Activated T-helper 2 cell treated with anti-CD3 and anti-CD28 coated beads, Interferon-gamma antibody, Interleukin-2, Interleukin-4, amounts not matched to agents 10 μg/mL and 5 μg/mL and 100 μg/mL, durations not matched to agents 14 hours and 24 hours and 36 hours (primary cell): ENCODE measurements at regions of chr11 and their contacts with region 1.

Region 1: GRCh38 chr11:83172551-83172950 is 15.6 kb downstream of the PCF11 start:
- DNase-seq: no peak
- H3K4me3 Mint-ChIP-seq: no peak overlapping the region
- H3K27ac Mint-ChIP-seq: no peak overlapping the region
- H3K4me1 Mint-ChIP-seq: peaks cover 61% of the 10 kb centered on the region
- H3K27me3 Mint-ChIP-seq: no peaks in the 10 kb centered on the region

Region 2: DNA sequence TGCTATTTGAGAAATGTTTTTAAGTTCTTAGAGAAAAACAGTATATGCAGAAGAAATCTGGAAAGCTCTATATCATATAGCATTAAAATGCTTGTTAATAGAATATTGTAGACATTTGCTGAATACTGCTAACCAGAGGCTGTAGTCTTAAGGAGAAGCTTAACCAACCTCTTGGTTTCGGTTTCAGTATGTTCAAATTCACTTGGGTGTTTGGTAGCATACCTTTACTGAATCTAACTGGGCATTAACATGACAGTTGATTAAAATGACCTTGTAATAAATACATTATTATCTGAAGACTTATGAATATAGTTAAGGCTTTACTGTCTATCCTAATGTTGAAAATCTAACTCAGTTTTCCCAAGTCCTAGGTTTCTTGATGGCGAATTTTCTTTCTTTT is 10.2 kb before region 1 on chr11:
- intact Hi-C with region 1: loop called (anchors 1 kb)
- DNase-seq: no peak
- H3K4me3 Mint-ChIP-seq: peak overlapping the region; percentile 64
- H3K27ac Mint-ChIP-seq: no peak overlapping the region
- H3K4me1 Mint-ChIP-seq: peaks cover 44% of the 10 kb centered on the region
- H3K27me3 Mint-ChIP-seq: no peaks in the 10 kb centered on the region